ENCODE measurements at regions of chr5 and their contacts with region 1.

Region 1: DNA sequence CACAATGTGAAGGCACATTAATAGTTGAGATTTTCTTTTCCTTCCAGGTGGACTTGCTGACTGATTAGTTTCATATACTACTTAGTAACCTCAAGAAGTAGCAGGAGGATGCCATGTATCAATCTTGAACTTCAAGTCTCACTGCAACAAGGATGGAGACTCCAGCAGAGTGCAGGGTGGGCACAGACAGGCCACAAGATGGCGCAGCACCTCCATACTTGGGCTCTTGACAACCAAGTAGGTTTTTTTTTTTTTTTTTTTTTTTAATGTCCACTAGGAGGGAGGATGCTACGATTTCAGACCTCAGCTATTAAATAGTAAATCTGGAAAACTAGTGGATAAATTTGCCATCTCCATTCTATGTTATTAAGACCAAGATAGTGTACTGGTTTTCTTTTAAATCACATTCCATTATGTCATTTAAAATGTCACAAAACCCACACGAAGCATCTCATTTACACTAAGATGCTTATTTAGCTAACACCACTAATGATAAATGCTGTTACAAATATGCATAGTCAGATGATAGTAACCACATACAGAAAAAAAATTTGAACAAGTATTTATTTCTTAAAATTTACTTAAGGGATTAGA is 58.6 kb downstream of the IL6ST start:
- DNase-seq: no peak
- H3K4me3 ChIP-seq: no peak overlapping the region
- H3K27ac ChIP-seq: no peak overlapping the region
- H3K4me1 ChIP-seq: peaks cover 0 to 5% (median 0%) of the 10 kb centered on the region in 3 donors
- H3K27me3 ChIP-seq: no peaks in the 10 kb centered on the region
- CTCF ChIP-seq: peak; percentile 42 to 84 (median 72)
- POLR2A ChIP-seq: no peak

Region 2: GRCh38 chr5:56200856-56201666 is 264.9 kb after region 1 on chr5:
- intact Hi-C with region 1: loop called (anchors 10 kb)
- DNase-seq: no peak
- H3K4me3 ChIP-seq: no peak overlapping the region
- H3K27ac ChIP-seq: no peak overlapping the region
- H3K4me1 ChIP-seq: peaks cover 0 to 9% (median 0%) of the 10 kb centered on the region in 3 donors
- H3K27me3 ChIP-seq: no peaks in the 10 kb centered on the region
- CTCF ChIP-seq: peak in 5 of 6 experiments; percentile 56 to 83 (median 76)
- POLR2A ChIP-seq: no peak

Measured in esophagus squamous epithelium (tissue), 5 donors.